Endothelial cell of umbilical vein (primary cell): ENCODE measurements at regions of chr7 and their contacts with region 1.

Region 1: DNA sequence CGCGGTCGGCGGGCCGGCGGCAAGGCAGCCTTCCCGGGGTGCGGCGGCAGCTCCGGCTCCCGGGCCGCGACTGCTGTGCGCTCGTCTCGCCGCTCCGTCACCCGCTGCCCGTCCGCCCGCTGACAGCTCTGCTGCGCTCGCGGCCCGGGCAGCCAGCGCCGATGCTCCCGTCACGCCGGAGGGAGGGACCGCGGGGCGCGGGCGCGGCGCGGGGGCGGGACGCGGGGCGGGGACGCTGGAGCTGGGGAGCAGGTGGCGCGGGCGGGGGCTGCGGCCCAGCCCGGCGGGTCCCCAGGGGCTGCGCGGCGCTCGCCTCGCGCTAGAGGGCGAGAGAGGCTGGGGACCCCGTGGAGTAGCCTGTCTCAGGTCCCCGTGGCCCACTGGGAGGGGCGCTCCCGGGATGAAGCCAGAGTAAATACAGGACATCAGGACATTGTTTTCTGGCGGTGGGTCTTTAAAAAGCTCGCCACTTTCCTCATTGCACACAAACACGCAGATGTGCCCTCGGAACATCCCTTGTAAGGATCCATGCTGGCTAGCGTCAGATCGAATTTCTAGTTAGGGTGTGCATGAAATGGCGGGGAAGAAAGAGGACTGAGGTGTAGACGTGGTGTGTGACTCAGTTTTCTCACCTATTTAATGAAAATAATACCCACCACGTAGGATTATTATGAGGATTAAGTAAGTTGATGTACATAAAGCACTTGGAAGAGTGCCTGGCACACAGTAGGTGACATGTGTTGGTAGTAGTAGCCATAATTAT is at the start of gene ELAPOR2:
- DNase-seq: peak; percentile 83
- H3K4me3 ChIP-seq: peak within 1 kb of the TSS; percentile 72 to 96 (median 79)
- H3K27ac ChIP-seq: peak within 1 kb of the TSS; percentile 57
- H3K4me1 ChIP-seq: peaks cover 43% of the 10 kb centered on the region
- H3K27me3 ChIP-seq: no peaks in the 10 kb centered on the region
- CTCF ChIP-seq: peak; percentile 32 to 61
- POLR2A ChIP-seq: peak; percentile 60
- total RNA-seq, gene ELAPOR2: 43.8 and 63.5 TPM in 2 replicates

Region 2: DNA sequence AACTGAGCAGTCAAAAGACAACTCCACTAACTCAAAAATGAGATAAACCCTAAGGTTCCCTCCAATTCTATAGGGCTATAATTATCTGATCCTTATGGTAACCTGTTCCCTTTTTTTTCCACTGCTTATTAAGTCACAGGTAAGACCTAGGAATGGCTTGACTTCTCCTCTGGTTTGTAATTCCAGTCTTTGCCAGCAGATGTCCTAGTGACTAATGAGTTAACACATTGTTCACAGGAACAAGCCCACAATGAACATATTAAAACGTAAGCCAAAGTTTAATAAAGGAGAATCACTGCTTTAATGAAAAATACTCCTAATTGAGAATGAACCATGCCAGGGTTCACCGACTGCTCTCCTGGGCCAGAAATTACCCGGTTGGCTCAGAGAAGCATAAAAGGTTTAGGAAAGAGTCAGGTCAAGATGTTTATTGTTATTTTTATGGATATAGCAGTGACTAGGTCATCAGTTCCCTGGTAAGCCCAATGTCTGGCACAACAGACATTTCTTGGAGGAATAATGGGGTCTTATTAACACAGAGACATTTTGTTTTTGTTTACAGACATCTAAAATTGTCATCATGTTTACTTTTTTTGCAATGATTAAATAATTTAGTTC is 120.4 kb before region 1 on chr7:
- CTCF ChIA-PET with region 1: interaction called, 10 read pairs
- POLR2A ChIA-PET with region 1: no interaction called
- dilution Hi-C with region 1: no loop called
- intact Hi-C with region 1: loop called (anchors 2 kb)
- DNase-seq: peak; percentile 87
- H3K4me3 ChIP-seq: no peak overlapping the region
- H3K27ac ChIP-seq: peak overlapping the region; percentile 24
- H3K4me1 ChIP-seq: no peaks in the 10 kb centered on the region
- H3K27me3 ChIP-seq: no peaks in the 10 kb centered on the region
- CTCF ChIP-seq: peak; percentile 46 to 57
- POLR2A ChIP-seq: no peak

Region 3: DNA sequence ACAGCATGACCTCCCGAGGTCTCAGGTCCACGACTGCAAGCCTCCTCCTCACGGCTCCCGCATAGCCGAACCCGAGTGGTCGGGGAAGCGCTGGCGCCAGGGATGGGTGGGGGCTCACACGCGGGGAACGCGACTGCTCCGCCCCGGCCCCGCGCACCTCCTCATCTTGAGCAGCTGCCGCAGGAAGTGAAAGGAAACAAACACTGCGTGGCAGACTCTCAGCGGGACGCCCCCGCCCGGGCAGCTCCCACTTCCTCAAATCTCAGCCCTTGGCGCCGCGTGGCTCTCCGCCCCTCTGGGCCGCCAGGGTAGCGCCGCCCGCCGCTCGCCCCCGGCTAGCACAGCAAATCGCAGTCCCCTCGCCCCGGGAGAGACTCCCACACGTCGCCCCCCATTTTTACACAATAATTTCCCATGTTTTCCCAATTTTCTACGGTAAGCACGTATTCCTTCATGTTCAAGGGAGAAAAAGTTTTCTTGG is 159.9 kb after region 1 on chr7 and contains the start of gene TMEM243:
- CTCF ChIA-PET with region 1: no interaction called
- POLR2A ChIA-PET with region 1: no interaction called
- dilution Hi-C with region 1: no loop called
- intact Hi-C with region 1: loop called (anchors 1 kb)
- DNase-seq: peak; percentile 87
- H3K4me3 ChIP-seq: peak within 1 kb of the TSS; percentile 32 to 76 (median 63)
- H3K27ac ChIP-seq: peak within 1 kb of the TSS; percentile 59
- H3K4me1 ChIP-seq: peaks cover 18% of the 10 kb centered on the region
- H3K27me3 ChIP-seq: peaks cover 3 to 13% of the 10 kb centered on the region in 2 experiments
- CTCF ChIP-seq: peak in 1 of 2 donors; percentile 8
- POLR2A ChIP-seq: peak; percentile 35
- total RNA-seq, gene TMEM243: 26.9 and 31.5 TPM in 2 replicates

Region 4: DNA sequence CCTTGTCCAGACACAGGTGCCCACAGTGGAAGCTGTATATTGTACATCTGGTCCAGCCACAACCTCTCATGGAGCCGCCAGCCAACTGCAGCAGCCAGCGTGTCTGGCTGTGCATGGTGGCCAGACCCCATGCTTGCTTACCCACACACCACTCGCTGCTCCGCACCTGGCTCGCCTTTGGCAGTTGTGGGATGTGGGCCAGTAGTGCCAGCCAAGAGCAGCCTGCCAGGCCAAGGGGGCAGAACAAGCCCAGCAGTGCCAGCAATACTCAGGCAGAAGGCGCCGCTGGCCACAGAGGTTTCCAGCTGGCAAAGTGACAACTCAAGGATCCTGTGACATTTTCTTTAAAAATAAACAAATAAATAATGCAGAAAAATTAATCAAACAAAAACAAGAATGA is 171.6 kb after region 1 on chr7:
- CTCF ChIA-PET with region 1: no interaction called
- POLR2A ChIA-PET with region 1: no interaction called
- dilution Hi-C with region 1: no loop called
- intact Hi-C with region 1: loop called (anchors 5 kb)
- DNase-seq: no peak
- H3K4me3 ChIP-seq: no peak overlapping the region
- H3K27ac ChIP-seq: no peak overlapping the region
- H3K4me1 ChIP-seq: no peaks in the 10 kb centered on the region
- H3K27me3 ChIP-seq: peaks cover 2 to 21% of the 10 kb centered on the region in 2 experiments
- CTCF ChIP-seq: no peak
- POLR2A ChIP-seq: no peak

Region 5: DNA sequence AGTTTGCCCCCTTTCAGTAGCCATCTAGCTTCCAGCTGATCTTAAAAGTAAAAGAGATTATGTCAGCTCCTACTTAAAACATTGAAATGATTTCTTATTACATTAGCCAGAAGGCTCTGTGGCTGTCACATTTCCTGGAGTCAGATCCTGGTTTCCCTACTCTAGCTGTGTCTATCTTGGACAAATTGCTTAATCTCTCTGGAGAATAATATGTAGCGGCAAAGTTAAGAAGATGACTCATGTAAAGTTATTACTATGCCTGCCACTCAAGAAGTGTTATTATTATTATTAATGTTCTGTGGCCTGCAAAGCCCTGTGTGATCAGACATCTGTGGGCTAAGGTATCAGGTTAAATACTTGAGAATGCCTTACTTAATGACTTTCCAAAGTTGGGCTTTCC is 675.7 kb after region 1 on chr7:
- CTCF ChIA-PET with region 1: no interaction called
- POLR2A ChIA-PET with region 1: no interaction called
- dilution Hi-C with region 1: no loop called
- intact Hi-C with region 1: no loop called
- DNase-seq: peak; percentile 39
- H3K4me3 ChIP-seq: no peak overlapping the region
- H3K27ac ChIP-seq: no peak overlapping the region
- H3K4me1 ChIP-seq: no peaks in the 10 kb centered on the region
- H3K27me3 ChIP-seq: no peaks in the 10 kb centered on the region
- CTCF ChIP-seq: no peak
- POLR2A ChIP-seq: no peak